Heart right ventricle (tissue), 16 donors: ENCODE measurements at regions of chr16 and their contacts with region 1.

Region 1: GRCh38 chr16:49112754-49113153 is 168.9 kb downstream of the CBLN1 start:
- DNase-seq: peak; percentile 50 to 59
- ATAC-seq: peak; percentile 43 to 97 (median 96)
- H3K4me3 ChIP-seq: no peak overlapping the region
- H3K27ac ChIP-seq: peak overlapping the region in 4 of 10 donors; percentile 46 to 70 (median 54)
- H3K4me1 ChIP-seq: peaks cover 0 to 23% (median 11%) of the 10 kb centered on the region in 9 donors
- H3K27me3 ChIP-seq: no peaks in the 10 kb centered on the region
- CTCF ChIP-seq: no peak

Region 2: DNA sequence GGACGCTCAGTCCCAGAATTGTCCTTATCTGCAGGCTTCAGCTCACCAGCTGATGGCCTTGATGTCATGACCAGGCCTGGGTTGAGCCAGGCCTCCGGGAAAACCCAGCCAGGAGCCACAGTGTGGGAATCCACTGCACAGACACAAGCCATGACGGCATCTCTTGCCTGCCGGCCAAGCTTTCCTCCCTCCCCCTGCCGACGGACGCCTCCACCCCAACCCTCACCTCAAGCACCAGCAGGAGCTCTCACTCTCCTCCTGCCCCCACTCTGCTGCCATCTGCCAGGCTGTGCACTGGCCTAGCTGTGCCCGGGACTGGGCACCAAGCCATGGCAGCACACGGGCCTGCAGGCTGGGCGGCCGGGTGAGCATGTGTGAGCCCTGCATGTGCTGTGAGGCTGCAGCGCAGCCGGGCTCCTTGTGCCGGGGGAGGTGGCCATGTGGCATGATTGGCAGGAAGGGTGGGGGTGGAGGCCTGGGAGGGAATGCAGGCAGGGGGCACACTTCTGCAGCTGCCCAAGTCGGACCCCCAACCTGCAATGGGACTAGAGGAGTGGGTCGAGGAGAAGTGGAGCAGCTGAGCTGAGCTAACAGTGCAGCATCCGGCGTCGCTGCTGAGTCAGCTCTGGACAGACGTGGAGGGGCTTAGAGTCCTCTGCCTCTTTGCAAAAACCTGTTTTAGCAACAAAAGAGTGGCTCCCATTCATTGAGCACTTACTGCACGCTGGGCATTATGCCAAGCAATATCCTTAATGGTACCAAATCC is 99.6 kb before region 1 on chr16:
- intact Hi-C with region 1: loop called in 1 of 10 experiments (anchors 5 kb)
- DNase-seq: peak; percentile 51 to 79
- ATAC-seq: peak; percentile 71 to 94 (median 89)
- H3K4me3 ChIP-seq: no peak overlapping the region
- H3K27ac ChIP-seq: peak overlapping the region in 6 of 10 donors; percentile 2 to 59 (median 37)
- H3K4me1 ChIP-seq: peaks cover 0 to 27% (median 10%) of the 10 kb centered on the region in 9 donors
- H3K27me3 ChIP-seq: peaks cover 0 to 4% (median 0%) of the 10 kb centered on the region in 7 donors
- CTCF ChIP-seq: peak in 1 of 9 donors; percentile 5